ENCODE measurements at regions of chr13 and their contacts with region 1.

Region 1: DNA sequence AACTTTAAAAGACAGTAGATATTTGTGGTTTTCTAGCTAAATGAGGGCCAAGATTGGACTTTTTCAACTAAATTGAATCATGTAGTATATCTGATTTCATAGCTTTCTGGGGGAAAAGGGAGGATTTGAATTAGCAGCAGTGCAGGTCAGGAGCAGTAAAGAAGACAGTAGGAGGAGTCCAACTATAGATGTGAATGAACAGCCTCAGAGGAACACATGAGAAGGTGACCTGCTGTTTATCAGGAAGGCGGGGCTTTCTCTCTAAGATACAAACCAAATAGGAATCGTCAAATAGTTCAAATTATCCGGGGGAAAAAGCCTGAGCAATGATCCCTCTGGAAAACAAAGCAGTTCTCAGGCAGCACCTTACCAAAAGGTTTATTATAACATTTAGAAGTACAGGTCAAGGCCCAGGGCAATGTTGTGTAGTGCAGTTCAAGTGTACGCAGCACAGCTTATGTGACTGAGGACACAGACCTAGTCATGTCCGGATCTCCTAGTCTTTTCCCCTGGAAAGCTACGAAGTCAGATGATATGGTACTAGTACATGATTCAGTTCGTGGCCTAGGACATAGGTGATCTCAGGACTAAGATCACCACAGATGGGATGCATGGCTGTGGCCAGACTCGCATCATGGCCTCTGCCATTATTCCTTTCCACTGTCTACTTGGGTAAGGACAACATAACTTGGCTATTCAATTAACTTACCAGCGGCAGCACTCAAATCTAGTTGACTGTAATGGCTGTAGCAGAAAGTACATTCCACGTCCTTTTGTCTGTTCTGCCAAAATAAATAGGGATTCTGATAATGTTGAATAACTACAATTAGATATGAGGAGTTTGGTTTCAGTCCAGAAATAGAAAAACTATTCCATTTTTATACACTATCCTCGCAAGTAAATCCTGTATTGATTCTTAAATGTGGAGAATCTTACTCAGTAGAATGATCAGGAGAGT is 40.3 kb downstream of the MPHOSPH8 start:
- DNase-seq: peak; percentile 26
- H3K4me3 ChIP-seq: no peak overlapping the region
- H3K27ac ChIP-seq: peak overlapping the region; percentile 12
- H3K4me1 ChIP-seq: peaks cover 22% of the 10 kb centered on the region
- H3K27me3 ChIP-seq: no peaks in the 10 kb centered on the region
- CTCF ChIP-seq: no peak
- POLR2A ChIP-seq: no peak

Region 2: DNA sequence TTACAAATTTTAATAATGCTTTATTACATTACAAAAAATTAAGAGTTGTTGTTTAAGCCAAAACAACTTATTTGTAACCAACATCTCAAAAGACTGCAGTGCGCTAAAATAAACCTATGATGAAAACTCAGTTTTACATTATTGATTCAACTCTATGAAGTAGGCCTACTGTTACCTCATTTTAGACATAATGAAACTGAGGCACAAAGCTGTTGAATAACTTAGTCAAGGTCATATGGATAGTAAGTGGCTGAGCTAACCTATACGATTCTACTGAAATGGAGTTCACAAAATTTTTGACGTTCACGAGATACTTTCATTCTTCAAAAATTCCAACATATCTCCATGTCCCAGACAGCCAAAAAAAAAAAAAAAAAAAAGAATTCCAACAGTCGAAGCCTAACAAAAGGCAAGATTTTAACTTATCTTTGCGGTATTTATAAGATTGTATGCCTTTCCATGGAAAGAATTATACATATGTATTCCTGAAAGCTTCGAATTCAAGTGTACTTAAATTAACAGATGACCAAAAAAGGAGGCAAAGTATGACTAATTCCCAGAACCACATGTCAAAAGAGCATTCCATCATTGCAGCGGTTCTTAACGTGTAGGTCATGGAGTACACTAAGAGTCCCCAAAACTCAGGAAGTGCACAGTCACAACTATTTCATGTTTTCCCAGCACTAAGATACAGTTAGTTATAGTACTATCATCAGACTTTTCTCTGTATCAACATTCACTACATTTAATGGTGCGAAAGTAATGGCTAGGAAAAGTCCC is 39.6 kb after region 1 on chr13:
- CTCF ChIA-PET with region 1: no interaction called
- POLR2A ChIA-PET with region 1: no interaction called
- dilution Hi-C with region 1: no loop called
- intact Hi-C with region 1: loop called (anchors 2 kb)
- DNase-seq: peak; percentile 40
- H3K4me3 ChIP-seq: no peak overlapping the region
- H3K27ac ChIP-seq: no peak overlapping the region
- H3K4me1 ChIP-seq: peaks cover 14% of the 10 kb centered on the region
- H3K27me3 ChIP-seq: no peaks in the 10 kb centered on the region
- CTCF ChIP-seq: no peak
- POLR2A ChIP-seq: no peak

Region 3: GRCh38 chr13:19782049-19782726 is 108.4 kb after region 1 on chr13:
- CTCF ChIA-PET with region 1: no interaction called
- POLR2A ChIA-PET with region 1: no interaction called
- dilution Hi-C with region 1: no loop called
- intact Hi-C with region 1: loop called (anchors 10 kb)
- DNase-seq: peak; percentile 75
- H3K4me3 ChIP-seq: peak overlapping the region; percentile 78 to 95 (median 93)
- H3K27ac ChIP-seq: peak overlapping the region; percentile 85
- H3K4me1 ChIP-seq: peaks cover 3% of the 10 kb centered on the region
- H3K27me3 ChIP-seq: no peaks in the 10 kb centered on the region
- CTCF ChIP-seq: no peak
- POLR2A ChIP-seq: no peak

Region 4: GRCh38 chr13:20127577-20128466 is 454.1 kb after region 1 on chr13:
- CTCF ChIA-PET with region 1: no interaction called
- POLR2A ChIA-PET with region 1: no interaction called
- dilution Hi-C with region 1: no loop called
- intact Hi-C with region 1: no loop called
- DNase-seq: peak; percentile 38
- H3K4me3 ChIP-seq: peak overlapping the region; percentile 5 to 40 (median 19)
- H3K27ac ChIP-seq: no peak overlapping the region
- H3K4me1 ChIP-seq: peaks cover 4% of the 10 kb centered on the region
- H3K27me3 ChIP-seq: peaks cover 24 to 31% of the 10 kb centered on the region in 2 experiments
- CTCF ChIP-seq: peak; percentile 20 to 56
- POLR2A ChIP-seq: no peak

Region 5: DNA sequence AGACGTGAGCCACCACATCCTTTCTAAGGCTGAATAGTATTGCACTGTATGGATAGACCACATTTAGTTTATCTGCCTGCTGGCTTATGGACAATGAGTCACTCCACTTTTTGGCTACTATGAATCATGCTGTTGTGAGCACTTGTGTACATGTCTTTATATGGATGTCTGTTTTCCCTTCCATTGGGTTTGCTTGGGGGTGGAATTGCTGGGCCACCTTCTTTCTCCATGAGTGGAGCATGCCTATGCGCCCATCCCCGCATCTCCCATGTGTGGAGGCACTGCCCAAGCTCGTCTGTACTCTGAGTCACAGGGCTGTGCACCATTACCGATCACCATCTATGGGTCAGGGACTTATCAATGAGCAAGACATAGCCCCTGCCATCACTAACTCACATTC is 685.6 kb after region 1 on chr13:
- CTCF ChIA-PET with region 1: no interaction called
- POLR2A ChIA-PET with region 1: no interaction called
- dilution Hi-C with region 1: no loop called
- intact Hi-C with region 1: no loop called
- DNase-seq: no peak
- H3K4me3 ChIP-seq: no peak overlapping the region
- H3K27ac ChIP-seq: no peak overlapping the region
- H3K4me1 ChIP-seq: no peaks in the 10 kb centered on the region
- H3K27me3 ChIP-seq: no peaks in the 10 kb centered on the region
- CTCF ChIP-seq: no peak
- POLR2A ChIP-seq: no peak

Region 6: DNA sequence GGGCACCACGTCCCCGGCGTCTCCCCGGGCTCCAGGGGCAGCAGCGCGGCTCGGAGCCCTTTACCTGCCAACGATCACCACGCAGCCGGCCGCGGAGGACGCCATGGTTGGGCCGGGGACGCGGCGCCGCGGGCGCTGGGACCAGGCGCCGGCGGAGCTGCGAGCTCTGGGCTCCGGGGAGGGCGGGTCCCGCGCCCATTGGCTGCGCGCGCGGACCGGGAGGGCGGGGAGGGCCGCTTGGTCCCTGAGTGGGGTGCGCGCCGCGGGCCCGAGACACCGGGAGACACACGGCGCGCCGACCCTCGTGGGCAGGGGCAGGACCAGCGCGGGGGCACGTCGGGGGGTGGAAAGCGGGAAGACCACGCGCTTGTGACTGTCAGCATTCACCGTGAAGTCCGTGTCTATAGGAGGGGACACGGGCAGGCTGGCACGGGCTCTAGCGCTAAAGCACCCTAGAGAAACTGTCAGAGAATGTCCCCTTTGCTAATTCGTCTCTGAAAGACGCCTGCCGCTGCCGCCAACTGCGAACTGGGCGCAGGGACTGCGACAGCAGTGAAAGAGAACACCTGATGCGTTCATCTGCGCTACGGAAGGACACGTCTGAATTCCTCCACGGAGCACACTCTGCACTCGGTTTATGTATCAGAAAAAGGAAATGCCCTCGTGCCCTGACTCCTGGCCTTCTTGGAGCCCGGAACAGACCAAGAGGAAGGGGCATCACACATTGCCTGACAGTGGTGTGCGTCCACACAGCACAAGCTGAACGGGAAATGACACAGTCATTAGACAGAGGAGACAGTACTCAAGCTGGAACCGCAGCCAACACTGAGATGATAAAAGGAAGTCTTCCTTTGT is 852.2 kb after region 1 on chr13 and contains the start of gene CRYL1:
- CTCF ChIA-PET with region 1: no interaction called
- POLR2A ChIA-PET with region 1: no interaction called
- dilution Hi-C with region 1: no loop called
- intact Hi-C with region 1: no loop called
- DNase-seq: peak; percentile 73
- H3K4me3 ChIP-seq: peak within 1 kb of the TSS; percentile 12 to 87 (median 60)
- H3K27ac ChIP-seq: peak within 1 kb of the TSS; percentile 67
- H3K4me1 ChIP-seq: peaks cover 13% of the 10 kb centered on the region
- H3K27me3 ChIP-seq: no peaks in the 10 kb centered on the region
- CTCF ChIP-seq: no peak
- POLR2A ChIP-seq: peak; percentile 51
- total RNA-seq, gene CRYL1: 13.9 and 18.8 TPM in 2 replicates

Measured in endothelial cell of umbilical vein (primary cell).